ENCODE measurements at regions of chr4 and their contacts with region 1.

Region 1: DNA sequence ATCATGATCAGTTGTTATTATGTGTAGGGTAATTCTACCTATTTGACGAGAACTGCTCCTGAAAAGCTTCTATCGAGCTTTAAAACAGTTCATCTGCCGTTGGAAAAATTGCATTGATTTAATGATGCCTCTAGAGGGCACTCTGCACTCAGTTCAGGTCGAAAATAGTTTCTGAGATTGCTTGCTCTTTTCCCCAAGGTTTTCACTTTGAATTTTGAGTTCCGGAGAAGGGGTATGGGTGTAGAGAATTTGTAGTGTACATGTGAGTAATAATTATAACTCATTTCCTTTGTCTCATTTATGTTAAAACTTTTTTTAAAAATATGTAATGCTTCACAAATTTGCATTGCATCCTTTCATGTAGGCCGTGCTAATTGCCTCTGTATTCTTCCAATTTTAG is 28.4 kb upstream of the TNIP3 start:
- DNase-seq: no peak
- H3K4me3 ChIP-seq: no peak overlapping the region
- CTCF ChIP-seq: peak; percentile 42

Region 2: DNA sequence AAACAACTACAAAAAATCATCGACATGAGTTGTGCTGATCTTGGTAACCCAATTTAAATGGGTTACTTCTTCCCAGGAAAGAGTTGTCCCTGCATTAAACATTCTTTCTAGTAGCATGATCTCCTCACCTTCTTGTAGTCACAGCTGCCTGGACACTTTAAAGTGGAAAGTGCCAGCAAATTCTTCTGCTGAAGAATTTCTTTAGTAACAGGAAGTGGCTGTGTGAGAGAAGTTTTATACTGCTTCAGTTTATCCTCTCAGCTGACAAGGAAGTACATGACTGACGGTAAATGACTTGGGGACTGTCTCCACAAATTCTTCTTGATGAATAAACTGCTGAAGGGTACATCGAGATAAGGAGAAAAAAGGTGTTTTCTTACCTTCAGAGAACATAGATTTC is 10.2 kb before region 1 on chr4:
- CTCF ChIA-PET with region 1: interaction called, 32 read pairs
- POLR2A ChIA-PET with region 1: no interaction called
- DNase-seq: peak; percentile 3
- H3K4me3 ChIP-seq: no peak overlapping the region
- CTCF ChIP-seq: no peak

Region 3: GRCh38 chr4:121221608-121222007 is 29.1 kb after region 1 on chr4:
- CTCF ChIA-PET with region 1: interaction called, 10 read pairs
- POLR2A ChIA-PET with region 1: no interaction called
- DNase-seq: no peak
- H3K4me3 ChIP-seq: no peak overlapping the region
- CTCF ChIP-seq: no peak

Region 4: DNA sequence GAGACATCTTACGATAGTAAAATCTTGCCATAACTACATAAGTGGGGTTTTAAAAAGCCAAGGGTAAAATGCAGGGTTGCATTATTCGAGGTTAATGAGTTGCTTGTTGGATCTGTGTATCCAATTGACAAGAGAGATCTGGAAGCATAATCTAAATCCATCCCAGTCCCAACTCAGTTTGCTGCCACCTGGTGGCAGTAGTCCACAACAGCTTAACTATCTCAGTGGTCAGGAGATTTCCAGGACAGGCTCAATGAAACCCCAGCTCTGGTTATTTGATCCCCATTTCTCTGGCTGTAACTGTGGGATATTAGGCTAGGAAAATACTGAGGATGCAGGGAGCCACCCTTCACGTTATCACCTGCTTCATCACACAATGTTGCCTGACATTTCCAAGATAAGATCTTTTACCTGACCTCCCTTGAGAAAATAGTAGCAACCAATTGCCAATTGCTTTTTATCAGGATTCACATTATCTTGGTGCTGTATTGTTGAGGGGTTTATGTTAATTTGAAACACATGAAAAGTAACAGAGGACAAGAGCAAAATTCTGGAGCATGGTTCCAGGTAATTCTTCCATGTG is 59.8 kb after region 1 on chr4:
- CTCF ChIA-PET with region 1: interaction called, 173 read pairs
- POLR2A ChIA-PET with region 1: no interaction called
- DNase-seq: no peak
- H3K4me3 ChIP-seq: no peak overlapping the region
- CTCF ChIP-seq: peak; percentile 77